AG04450 (cell line): ENCODE measurements at regions of chr9 and their contacts with region 1.

Region 1: GRCh38 chr9:98998441-98999151 is 54.9 kb downstream of the COL15A1 start:
- DNase-seq: no peak
- H3K4me3 ChIP-seq: no peak overlapping the region
- H3K27ac ChIP-seq: no peak overlapping the region
- H3K27me3 ChIP-seq: peaks cover 33% of the 10 kb centered on the region
- CTCF ChIP-seq: peak; percentile 92

Region 2: DNA sequence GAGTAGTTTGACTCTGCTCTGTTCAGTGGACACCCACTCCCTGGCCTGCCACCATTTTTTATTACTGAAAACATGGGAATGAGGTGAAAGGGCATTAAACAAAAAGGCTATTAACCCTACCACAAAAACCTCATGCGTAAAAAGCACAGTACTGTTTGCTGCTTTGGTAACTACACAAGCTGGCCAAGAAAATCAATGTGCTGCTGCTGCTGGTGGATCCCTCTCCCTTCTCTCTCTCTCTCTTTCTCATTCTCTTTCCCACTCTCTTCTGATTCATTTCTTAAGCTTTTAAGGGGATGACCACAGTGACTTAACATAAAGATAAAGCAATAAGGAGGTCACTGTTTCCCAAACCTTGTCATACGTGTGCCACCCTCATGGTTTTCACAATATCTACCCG is 559.9 kb before region 1 on chr9:
- CTCF ChIA-PET with region 1: no interaction called
- POLR2A ChIA-PET with region 1: no interaction called
- DNase-seq: no peak
- H3K4me3 ChIP-seq: no peak overlapping the region
- H3K27ac ChIP-seq: no peak overlapping the region
- H3K27me3 ChIP-seq: peaks cover 10% of the 10 kb centered on the region
- CTCF ChIP-seq: no peak

Region 3: DNA sequence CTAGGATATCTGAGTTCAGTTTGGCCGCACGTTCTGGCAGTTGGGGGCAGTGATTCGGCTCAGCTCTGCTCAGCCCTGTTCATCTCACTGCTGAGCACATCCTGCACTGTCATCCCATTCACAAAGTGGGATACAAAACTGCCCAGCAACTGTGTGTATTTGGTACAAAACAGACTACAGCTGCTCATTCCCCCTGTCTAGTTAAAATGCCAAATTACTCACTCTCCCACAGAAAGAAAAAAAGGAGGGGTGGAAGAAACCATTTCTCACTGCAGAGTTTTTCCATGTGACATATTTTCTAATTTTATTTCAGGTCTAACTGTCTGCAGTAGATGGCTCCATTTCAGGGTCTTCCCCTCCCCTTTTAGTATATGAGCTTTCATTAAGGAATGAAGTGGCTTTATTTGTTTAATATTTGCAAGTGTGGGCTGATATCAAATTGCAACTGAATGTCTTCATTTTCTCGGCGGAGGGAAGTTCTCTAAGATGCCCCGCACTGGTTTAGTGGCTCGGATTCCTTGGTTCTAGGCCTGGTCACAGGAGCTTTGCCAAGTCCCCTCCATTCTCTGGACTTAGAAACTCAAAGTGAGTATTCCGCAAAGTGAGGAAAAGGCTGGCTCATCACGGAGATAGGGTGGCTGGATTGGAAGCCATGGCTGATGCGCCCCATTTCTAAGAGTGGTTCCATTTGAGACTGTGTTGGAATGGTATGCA is 40.2 kb before region 1 on chr9:
- CTCF ChIA-PET with region 1: interaction called, 21 read pairs
- POLR2A ChIA-PET with region 1: no interaction called
- DNase-seq: peak; percentile 94
- H3K4me3 ChIP-seq: no peak overlapping the region; the same call in 1 of the 2 replicates
- H3K27ac ChIP-seq: peak overlapping the region; percentile 90
- H3K27me3 ChIP-seq: no peaks in the 10 kb centered on the region
- CTCF ChIP-seq: 0 out of 2 replicates have a peak, but pooled peaks have one; percentile 14

Region 4: DNA sequence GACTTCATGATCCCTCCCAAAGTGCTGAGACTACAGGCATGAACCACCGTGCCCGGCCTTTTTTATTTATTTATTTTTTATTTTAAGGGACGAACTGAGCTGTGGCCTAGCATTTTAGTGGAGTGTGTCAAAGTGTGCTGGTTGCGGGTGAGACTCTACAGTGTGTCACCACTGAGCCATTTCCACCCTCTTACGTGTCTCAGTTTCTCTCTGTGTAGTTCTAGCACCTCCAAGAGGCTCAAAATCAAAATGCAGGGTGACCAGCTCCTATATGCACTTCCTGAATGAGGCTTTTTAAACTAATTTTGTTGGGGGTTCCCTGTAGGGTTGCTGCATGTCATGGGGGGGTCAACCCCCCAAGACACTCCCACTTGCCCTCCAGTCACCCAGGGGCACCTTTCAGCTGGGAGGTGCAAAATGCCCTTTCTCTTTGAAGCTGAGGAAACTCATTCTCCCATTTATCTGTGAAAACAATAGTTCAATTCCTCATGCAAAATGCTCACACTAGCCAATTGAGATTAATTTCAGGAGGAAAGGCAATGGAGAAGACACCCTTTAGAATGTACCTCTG is 14.4 kb after region 1 on chr9:
- CTCF ChIA-PET with region 1: interaction called, 18 read pairs
- POLR2A ChIA-PET with region 1: no interaction called
- DNase-seq: no peak
- H3K4me3 ChIP-seq: no peak overlapping the region
- H3K27ac ChIP-seq: no peak overlapping the region
- H3K27me3 ChIP-seq: no peaks in the 10 kb centered on the region
- CTCF ChIP-seq: 0 out of 2 replicates have a peak, but pooled peaks have one; percentile 9

Region 5: GRCh38 chr9:99040911-99041582 is 42.5 kb after region 1 on chr9:
- CTCF ChIA-PET with region 1: interaction called, 11 read pairs
- POLR2A ChIA-PET with region 1: no interaction called
- DNase-seq: peak; percentile 52
- H3K4me3 ChIP-seq: no peak overlapping the region
- H3K27ac ChIP-seq: peak overlapping the region; percentile 73
- H3K27me3 ChIP-seq: peaks cover 7% of the 10 kb centered on the region
- CTCF ChIP-seq: no peak

Region 6: DNA sequence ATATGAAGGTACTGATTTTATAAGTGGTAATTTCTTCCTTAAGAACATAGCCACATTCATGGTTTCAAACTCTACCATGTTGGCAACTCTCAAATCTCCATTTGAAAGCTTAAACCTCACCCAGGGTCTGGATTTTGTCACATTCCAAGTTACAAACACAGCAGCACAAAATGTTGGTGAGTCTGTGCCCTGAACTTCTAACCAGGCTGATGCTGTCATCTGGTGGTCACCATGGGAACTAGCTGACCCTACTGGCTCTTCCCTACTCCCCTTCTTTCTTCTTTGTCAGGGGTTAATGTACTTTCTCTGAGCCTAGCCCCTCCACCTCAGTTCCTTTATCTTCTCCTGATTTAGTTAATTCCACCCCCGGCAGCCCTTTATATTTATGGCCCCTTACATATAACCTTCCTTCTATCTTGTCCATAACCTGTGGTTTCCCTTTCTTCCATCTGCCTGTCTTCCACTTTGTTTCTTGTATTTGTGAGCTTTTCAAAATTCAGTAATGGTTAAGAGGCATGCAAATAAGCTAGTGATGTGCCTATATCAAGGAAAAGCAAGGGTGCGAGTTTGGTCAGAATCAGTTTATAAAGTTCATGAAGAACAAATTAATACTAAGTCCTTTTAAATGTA is 142.2 kb after region 1 on chr9:
- CTCF ChIA-PET with region 1: interaction called, 161 read pairs
- POLR2A ChIA-PET with region 1: no interaction called
- DNase-seq: peak; percentile 34
- H3K4me3 ChIP-seq: no peak overlapping the region
- H3K27ac ChIP-seq: no peak overlapping the region
- H3K27me3 ChIP-seq: no peaks in the 10 kb centered on the region
- CTCF ChIP-seq: peak; percentile 92